SK-N-SH (cell line): ENCODE measurements at regions of chr12 and their contacts with region 1.

Region 1: DNA sequence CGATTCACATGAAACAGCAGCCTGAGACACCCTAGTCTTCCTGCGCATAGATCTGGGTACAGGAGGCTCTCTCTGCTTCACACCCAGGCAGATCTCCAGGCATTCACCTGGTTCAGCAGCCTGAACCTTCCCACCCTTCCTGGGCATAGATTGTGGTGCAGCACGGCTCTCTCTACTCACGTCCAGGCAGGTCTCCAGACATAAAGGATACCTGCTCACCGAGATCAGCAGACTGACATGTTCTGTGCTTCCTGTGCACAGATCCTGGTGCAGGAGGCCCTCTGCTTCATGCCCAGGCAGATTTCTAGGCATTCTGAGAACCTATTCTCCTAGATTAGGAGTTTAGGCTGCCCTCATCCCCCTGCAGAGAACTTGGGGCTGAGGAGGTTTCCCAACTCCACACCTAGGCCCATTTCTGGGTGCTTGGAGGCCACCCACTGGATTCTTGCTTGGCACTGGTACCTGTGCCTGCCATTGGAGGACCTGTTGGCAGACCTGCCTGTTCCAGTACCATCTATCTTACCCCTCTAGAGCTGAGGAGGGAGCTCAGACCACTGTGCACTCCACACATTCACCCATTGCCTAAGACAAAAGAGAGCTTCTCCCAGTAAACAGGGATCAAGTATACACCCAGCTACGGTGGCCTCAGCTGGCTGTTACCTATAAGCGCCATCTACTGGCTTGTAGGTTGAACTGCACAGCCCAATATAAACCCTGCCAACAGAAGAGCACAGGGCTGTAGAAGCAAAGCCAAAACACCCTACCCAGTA is 28.0 kb upstream of the GARIN6 start:
- DNase-seq: peak; percentile 22
- H3K4me3 ChIP-seq: peak overlapping the region in 1 of 2 experiments; percentile 28; a peak in 1 of 4 replicates
- H3K27ac ChIP-seq: no peak overlapping the region
- H3K4me1 ChIP-seq: no peaks in the 10 kb centered on the region
- H3K27me3 ChIP-seq: no peaks in the 10 kb centered on the region
- CTCF ChIP-seq: peak; percentile 65
- EP300 ChIP-seq: no peak
- RAD21 ChIP-seq: peak; percentile 71

Region 2: DNA sequence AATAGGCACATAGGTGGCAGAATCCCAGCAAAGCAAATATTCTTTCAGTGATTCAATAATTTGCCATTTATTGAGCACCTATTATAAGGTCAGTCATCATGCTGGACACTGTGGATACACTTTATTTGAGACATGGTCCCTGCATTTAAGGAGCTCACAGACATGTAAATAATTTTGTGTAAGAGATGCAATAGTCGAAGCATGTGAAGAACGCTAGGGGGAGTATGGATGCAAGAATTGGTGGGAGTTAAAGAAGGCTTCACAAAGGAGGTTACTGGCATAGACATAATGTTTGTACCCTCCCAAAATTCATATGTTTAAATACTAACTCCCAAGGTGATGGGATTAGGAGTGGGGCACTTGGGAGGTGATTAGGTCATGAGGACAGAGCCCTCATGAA is 232.7 kb before region 1 on chr12:
- CTCF ChIA-PET with region 1: interaction called, 14 read pairs
- POLR2A ChIA-PET with region 1: no interaction called
- DNase-seq: peak; percentile 3
- H3K4me3 ChIP-seq: no peak overlapping the region
- H3K27ac ChIP-seq: no peak overlapping the region
- H3K4me1 ChIP-seq: peaks cover 0 to 3% of the 10 kb centered on the region in 2 experiments; a peak in 2 of 4 replicates
- H3K27me3 ChIP-seq: no peaks in the 10 kb centered on the region
- CTCF ChIP-seq: peak; percentile 55
- EP300 ChIP-seq: no peak
- RAD21 ChIP-seq: peak; percentile 56

Region 3: GRCh38 chr12:99553459-99553858 is 66.1 kb before region 1 on chr12:
- CTCF ChIA-PET with region 1: no interaction called
- POLR2A ChIA-PET with region 1: no interaction called
- DNase-seq: no peak
- H3K4me3 ChIP-seq: no peak overlapping the region
- H3K27ac ChIP-seq: no peak overlapping the region
- H3K4me1 ChIP-seq: no peaks in the 10 kb centered on the region
- H3K27me3 ChIP-seq: no peaks in the 10 kb centered on the region
- CTCF ChIP-seq: no peak
- EP300 ChIP-seq: no peak
- RAD21 ChIP-seq: no peak